ENCODE measurements at regions of chr1 and their contacts with region 1.

Region 1: GRCh38 chr1:108559215-108560186 is at the start of gene EEIG2:
- DNase-seq: peak; percentile 94
- H3K4me3 ChIP-seq: peak within 1 kb of the TSS; percentile 69 to 80 (median 74)
- H3K27ac ChIP-seq: peak within 1 kb of the TSS; percentile 68 to 77 (median 70)
- H3K4me1 ChIP-seq: peaks cover 12 to 29% (median 29%) of the 10 kb centered on the region in 4 donors
- H3K27me3 ChIP-seq: no peaks in the 10 kb centered on the region
- CTCF ChIP-seq: peak; percentile 78 to 95 (median 84)
- EP300 ChIP-seq: no peak
- POLR2A ChIP-seq: no peak
- total RNA-seq, gene EEIG2: 11.6 to 17.2 (median 14.4) TPM

Region 2: GRCh38 chr1:108512239-108512981 is 47.1 kb before region 1 on chr1:
- intact Hi-C with region 1: loop called (anchors 5 kb)
- DNase-seq: no peak
- H3K4me3 ChIP-seq: no peak overlapping the region
- H3K27ac ChIP-seq: no peak overlapping the region
- H3K4me1 ChIP-seq: no peaks in the 10 kb centered on the region
- H3K27me3 ChIP-seq: no peaks in the 10 kb centered on the region
- CTCF ChIP-seq: peak; percentile 84 to 85 (median 84)
- EP300 ChIP-seq: no peak
- POLR2A ChIP-seq: no peak

Region 3: GRCh38 chr1:108643492-108644335 is 84.2 kb after region 1 on chr1:
- intact Hi-C with region 1: loop called (anchors 5 kb)
- DNase-seq: no peak
- H3K4me3 ChIP-seq: no peak overlapping the region
- H3K27ac ChIP-seq: no peak overlapping the region
- H3K4me1 ChIP-seq: no peaks in the 10 kb centered on the region
- H3K27me3 ChIP-seq: no peaks in the 10 kb centered on the region
- CTCF ChIP-seq: peak; percentile 64 to 68 (median 65)
- EP300 ChIP-seq: no peak
- POLR2A ChIP-seq: no peak

Measured in esophagus muscularis mucosa (tissue), 4 donors.